ENCODE measurements at regions of chr10 and their contacts with region 1.

Region 1: DNA sequence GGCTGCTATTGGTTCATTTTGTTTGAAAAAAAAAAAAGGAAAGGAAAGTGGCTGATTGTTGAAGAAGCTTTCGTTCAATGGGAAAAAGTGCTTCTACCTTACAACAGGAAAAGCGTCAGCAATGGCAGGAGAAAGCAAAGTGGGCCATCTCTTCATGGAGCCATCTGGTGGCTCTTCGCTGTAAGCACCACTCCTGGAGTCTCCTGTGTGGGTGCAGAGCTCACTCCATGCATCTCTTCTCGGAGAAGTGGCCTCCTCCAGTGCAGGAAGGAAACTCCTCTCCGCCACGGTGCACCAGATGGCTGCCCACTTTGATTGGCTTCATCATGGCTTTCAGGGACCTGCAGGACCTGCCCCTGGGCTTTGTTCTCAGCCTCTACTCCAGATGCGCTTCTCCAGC is 250.9 kb downstream of the PTEN start:
- DNase-seq: peak; percentile 41 to 69 (median 68)
- ATAC-seq: peak; percentile 84 to 95 (median 95)
- H3K4me3 ChIP-seq: no peak overlapping the region
- H3K27ac ChIP-seq: no peak overlapping the region
- H3K4me1 ChIP-seq: peaks cover 0 to 11% (median 4%) of the 10 kb centered on the region in 4 donors
- H3K27me3 ChIP-seq: no peaks in the 10 kb centered on the region
- CTCF ChIP-seq: peak; percentile 52 to 77 (median 72)
- POLR2A ChIP-seq: no peak

Region 2: DNA sequence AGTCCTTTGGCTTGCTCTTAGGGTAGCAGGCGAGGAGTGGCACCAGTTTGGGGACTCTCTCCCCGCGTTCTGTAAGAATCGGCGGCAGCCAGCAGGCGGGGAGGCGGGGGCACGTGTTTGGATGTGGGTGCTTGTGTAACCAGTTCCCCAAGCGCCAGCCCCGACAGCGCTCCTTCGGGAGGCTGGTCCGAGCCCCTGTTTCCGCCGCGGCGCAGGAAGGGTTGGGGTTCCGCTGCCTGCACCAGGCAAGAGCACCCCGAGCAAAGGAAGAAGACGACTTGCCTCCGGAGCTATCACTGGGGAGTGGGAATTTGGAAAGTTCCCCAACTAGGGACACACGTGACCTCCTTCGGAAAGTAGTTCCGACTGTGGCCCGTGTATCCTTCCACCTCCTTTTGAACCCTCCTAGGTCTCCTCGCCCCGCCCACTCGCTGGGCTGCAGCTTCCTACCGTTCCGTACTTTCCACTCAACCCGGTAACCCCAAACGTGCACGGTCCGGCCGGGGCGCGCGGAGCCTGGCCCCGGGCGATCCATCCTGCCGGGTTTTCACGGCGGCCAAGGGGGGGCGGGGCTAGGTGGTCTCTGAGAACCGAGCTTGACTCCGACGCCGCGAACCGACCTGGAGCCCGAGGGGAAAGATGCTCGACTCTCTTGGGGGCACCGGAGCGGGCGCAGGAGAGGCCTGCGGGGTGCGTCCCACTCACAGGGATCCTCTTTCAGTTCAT is 252.3 kb before region 1 on chr10:
- intact Hi-C with region 1: loop called in 1 of 2 experiments (anchors 10 kb)
- DNase-seq: peak; percentile 97 to 98 (median 97)
- ATAC-seq: peak; percentile 71 to 85 (median 80)
- H3K4me3 ChIP-seq: peak overlapping the region; percentile 69 to 86 (median 70)
- H3K27ac ChIP-seq: peak overlapping the region; percentile 93 to 98 (median 97)
- H3K4me1 ChIP-seq: peaks cover 0 to 11% (median 5%) of the 10 kb centered on the region in 4 donors
- H3K27me3 ChIP-seq: no peaks in the 10 kb centered on the region
- CTCF ChIP-seq: no peak
- POLR2A ChIP-seq: peak; percentile 56

Region 3: DNA sequence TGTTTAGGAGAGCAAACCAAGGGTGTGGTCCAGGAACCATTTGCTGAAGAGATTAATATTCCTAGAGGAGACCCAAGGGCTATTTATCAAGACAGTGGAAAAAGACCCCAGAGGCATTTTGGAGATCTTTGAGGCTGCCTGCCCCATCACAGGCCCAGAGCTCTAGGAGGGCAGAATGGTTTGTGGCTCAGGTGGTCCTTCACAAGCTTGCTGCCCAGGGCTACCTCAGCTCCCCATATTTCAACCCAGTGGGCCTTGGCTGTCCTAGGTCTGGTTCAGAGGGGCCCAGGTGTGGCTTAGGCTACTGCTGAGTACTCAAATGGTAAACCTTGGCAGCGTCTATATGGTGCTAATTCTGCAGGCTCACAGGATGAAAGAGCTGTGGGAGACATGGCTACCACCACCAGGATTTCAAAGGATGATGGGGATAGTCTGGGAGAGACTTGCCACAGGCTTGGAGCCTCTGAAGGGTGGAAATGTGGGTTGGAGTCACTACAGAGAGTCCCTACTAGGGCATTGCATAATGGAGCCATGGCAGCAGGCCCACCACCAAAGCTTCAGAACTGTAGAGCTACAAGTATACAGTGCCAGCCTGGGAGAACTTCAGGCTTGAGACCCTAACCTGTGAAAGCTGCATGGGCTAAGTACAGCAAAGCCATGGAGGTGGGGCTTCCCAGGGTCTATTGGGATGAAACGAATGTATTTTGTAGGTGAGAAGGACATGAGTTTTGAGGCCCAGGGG is 226.6 kb before region 1 on chr10:
- intact Hi-C with region 1: no loop called
- DNase-seq: no peak
- ATAC-seq: peak; percentile 21 to 33 (median 30)
- H3K4me3 ChIP-seq: no peak overlapping the region
- H3K27ac ChIP-seq: no peak overlapping the region
- H3K4me1 ChIP-seq: no peaks in the 10 kb centered on the region
- H3K27me3 ChIP-seq: no peaks in the 10 kb centered on the region
- CTCF ChIP-seq: no peak
- POLR2A ChIP-seq: no peak

Region 4: GRCh38 chr10:88392222-88392621 is 277.9 kb after region 1 on chr10:
- intact Hi-C with region 1: loop called in 1 of 2 experiments (anchors 10 kb)
- DNase-seq: no peak
- ATAC-seq: peak; percentile 60 to 81 (median 76)
- H3K4me3 ChIP-seq: no peak overlapping the region
- H3K27ac ChIP-seq: no peak overlapping the region
- H3K4me1 ChIP-seq: peaks cover 0 to 15% (median 7%) of the 10 kb centered on the region in 4 donors
- H3K27me3 ChIP-seq: no peaks in the 10 kb centered on the region
- CTCF ChIP-seq: no peak
- POLR2A ChIP-seq: no peak

Measured in right lobe of liver (tissue), 6 donors.